Endothelial cell of umbilical vein (primary cell): ENCODE measurements at regions of chr5 and their contacts with region 1.

Region 1: DNA sequence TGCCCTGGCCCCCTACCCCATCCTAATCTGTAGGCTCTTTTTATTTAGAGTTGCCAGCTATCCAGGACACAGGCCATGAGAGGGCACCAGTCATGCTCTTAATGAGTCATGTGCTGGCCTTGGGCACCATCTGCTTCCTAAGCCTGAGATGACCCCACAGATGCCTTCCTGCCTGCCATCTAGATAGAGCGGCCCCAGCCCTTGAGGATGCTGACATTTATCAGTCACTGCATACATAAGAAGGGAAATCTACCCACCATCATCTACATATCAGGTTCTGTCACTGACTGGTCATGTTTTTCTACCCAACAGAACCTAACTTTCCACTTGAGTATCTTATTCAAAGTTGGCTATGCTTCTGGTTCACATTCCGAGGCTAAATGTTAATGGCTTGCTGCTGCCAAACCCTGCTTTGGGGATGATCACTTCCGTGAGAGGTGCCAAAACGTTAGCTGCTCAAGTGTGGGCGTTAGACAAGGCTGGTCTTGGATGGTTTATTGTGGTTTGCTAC is 49.9 kb upstream of the TTC23L start:
- DNase-seq: peak; percentile 95
- H3K4me3 ChIP-seq: no peak overlapping the region
- H3K27ac ChIP-seq: peak overlapping the region; percentile 81
- H3K4me1 ChIP-seq: peaks cover 46% of the 10 kb centered on the region
- H3K27me3 ChIP-seq: no peaks in the 10 kb centered on the region
- CTCF ChIP-seq: no peak
- POLR2A ChIP-seq: peak; percentile 84

Region 2: GRCh38 chr5:34717426-34718327 is 71.4 kb before region 1 on chr5:
- CTCF ChIA-PET with region 1: no interaction called
- POLR2A ChIA-PET with region 1: interaction called, 4 read pairs
- dilution Hi-C with region 1: no loop called
- intact Hi-C with region 1: loop called (anchors 2 kb)
- DNase-seq: peak; percentile 96
- H3K4me3 ChIP-seq: peak overlapping the region in 1 of 3 experiments; percentile 25
- H3K27ac ChIP-seq: peak overlapping the region; percentile 96
- H3K4me1 ChIP-seq: peaks cover 70% of the 10 kb centered on the region
- H3K27me3 ChIP-seq: no peaks in the 10 kb centered on the region
- CTCF ChIP-seq: no peak
- POLR2A ChIP-seq: peak; percentile 18